Caco-2 (cell line): ENCODE measurements at regions of chr20 and their contacts with region 1.

Region 1: DNA sequence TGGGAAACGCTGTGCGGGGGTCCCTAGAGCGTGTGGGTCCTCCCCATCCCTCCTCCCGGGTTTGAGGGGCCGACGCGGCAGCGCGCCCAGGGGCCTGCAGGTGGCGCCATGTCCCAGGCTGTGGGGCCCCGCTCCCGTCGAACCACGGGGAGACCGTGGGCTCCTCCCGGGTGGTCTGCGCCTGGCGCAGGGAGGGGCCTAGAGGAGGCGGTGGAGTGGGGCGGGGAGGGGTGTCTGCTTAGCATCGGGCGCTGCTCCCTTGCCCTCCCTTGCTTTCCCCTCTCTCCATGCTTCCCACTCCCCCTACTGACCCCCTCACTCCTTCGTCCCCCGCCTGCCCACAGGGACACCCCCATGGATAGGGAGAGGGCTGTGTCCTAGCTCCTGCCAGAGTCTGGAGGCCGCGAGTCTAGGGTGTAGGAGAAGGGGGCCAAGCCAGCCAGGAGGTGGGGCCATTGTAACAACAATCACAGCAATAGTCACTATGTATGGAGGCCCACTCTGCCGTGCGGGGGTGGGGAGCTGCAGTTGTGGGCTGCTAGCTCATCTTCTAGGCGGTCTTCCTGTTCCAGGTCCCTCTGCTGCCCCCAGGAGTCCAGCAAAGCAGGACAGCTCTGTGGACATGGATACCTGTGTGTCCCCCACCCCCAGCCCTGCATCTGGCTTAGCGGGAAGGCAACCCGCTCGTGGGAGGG is 51.7 kb downstream of the CHMP4B start:
- DNase-seq: peak; percentile 77 to 83
- H3K4me3 ChIP-seq: no peak overlapping the region
- H3K4me3 Mint-ChIP-seq: no peak overlapping the region
- H3K27ac Mint-ChIP-seq: no peak overlapping the region
- H3K4me1 ChIP-seq: no peaks in the 10 kb centered on the region; the same call in 1 of the 2 replicates
- H3K4me1 Mint-ChIP-seq: peaks cover 12% of the 10 kb centered on the region
- H3K27me3 ChIP-seq: no peaks in the 10 kb centered on the region
- H3K27me3 Mint-ChIP-seq: no peaks in the 10 kb centered on the region
- CTCF ChIP-seq: peak; percentile 60 to 75

Region 2: DNA sequence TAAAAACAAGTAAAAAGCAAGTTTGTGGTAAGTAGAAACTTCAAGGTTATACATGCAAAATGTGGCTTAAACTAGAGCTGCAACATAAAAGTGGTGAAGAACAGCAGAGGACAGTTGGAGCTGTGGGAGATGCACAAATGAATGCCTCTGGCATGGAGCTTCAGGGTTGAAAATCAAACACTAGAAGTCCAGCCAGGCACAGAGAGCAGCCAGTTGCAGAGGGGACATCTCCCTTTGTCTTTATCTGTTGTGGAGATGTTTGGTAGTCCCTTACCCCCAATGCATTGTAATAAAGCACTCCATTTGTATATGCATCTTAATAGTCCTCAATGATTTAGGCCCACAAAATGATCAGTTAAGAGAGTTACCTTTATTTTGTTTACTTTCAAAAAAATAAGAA is 273.8 kb before region 1 on chr20:
- CTCF ChIA-PET with region 1: no interaction called
- POLR2A ChIA-PET with region 1: no interaction called
- intact Hi-C with region 1: no loop called
- DNase-seq: no peak
- H3K4me3 ChIP-seq: no peak overlapping the region
- H3K4me3 Mint-ChIP-seq: no peak overlapping the region
- H3K27ac Mint-ChIP-seq: no peak overlapping the region
- H3K4me1 ChIP-seq: peaks cover 11% of the 10 kb centered on the region
- H3K4me1 Mint-ChIP-seq: peaks cover 8% of the 10 kb centered on the region
- H3K27me3 ChIP-seq: no peaks in the 10 kb centered on the region
- H3K27me3 Mint-ChIP-seq: no peaks in the 10 kb centered on the region
- CTCF ChIP-seq: no peak

Region 3: GRCh38 chr20:33606118-33606771 is 256.6 kb before region 1 on chr20:
- CTCF ChIA-PET with region 1: no interaction called
- POLR2A ChIA-PET with region 1: no interaction called
- intact Hi-C with region 1: no loop called
- DNase-seq: no peak
- H3K4me3 ChIP-seq: no peak overlapping the region
- H3K4me3 Mint-ChIP-seq: no peak overlapping the region
- H3K27ac Mint-ChIP-seq: no peak overlapping the region
- H3K4me1 ChIP-seq: no peaks in the 10 kb centered on the region
- H3K4me1 Mint-ChIP-seq: no peaks in the 10 kb centered on the region
- H3K27me3 ChIP-seq: no peaks in the 10 kb centered on the region
- H3K27me3 Mint-ChIP-seq: no peaks in the 10 kb centered on the region
- CTCF ChIP-seq: no peak

Region 4: GRCh38 chr20:33791959-33792597 is 70.8 kb before region 1 on chr20:
- CTCF ChIA-PET with region 1: interaction called, 3 read pairs
- POLR2A ChIA-PET with region 1: no interaction called
- intact Hi-C with region 1: loop called (anchors 2 kb)
- DNase-seq: peak in 1 of 2 experiments; percentile 77
- H3K4me3 ChIP-seq: no peak overlapping the region
- H3K4me3 Mint-ChIP-seq: no peak overlapping the region
- H3K27ac Mint-ChIP-seq: no peak overlapping the region
- H3K4me1 ChIP-seq: peaks cover 17% of the 10 kb centered on the region
- H3K4me1 Mint-ChIP-seq: peaks cover 18% of the 10 kb centered on the region
- H3K27me3 ChIP-seq: no peaks in the 10 kb centered on the region
- H3K27me3 Mint-ChIP-seq: no peaks in the 10 kb centered on the region
- CTCF ChIP-seq: peak; percentile 90 to 99

Region 5: GRCh38 chr20:33843854-33844253 is 19.0 kb before region 1 on chr20:
- CTCF ChIA-PET with region 1: no interaction called
- POLR2A ChIA-PET with region 1: no interaction called
- intact Hi-C with region 1: no loop called
- DNase-seq: no peak
- H3K4me3 ChIP-seq: no peak overlapping the region
- H3K4me3 Mint-ChIP-seq: no peak overlapping the region
- H3K27ac Mint-ChIP-seq: no peak overlapping the region
- H3K4me1 ChIP-seq: peaks cover 13% of the 10 kb centered on the region
- H3K4me1 Mint-ChIP-seq: peaks cover 23% of the 10 kb centered on the region
- H3K27me3 ChIP-seq: no peaks in the 10 kb centered on the region
- H3K27me3 Mint-ChIP-seq: no peaks in the 10 kb centered on the region
- CTCF ChIP-seq: no peak

Region 6: GRCh38 chr20:34015401-34016335 is 152.8 kb after region 1 on chr20:
- CTCF ChIA-PET with region 1: no interaction called
- POLR2A ChIA-PET with region 1: no interaction called
- intact Hi-C with region 1: no loop called
- DNase-seq: no peak
- H3K4me3 ChIP-seq: no peak overlapping the region
- H3K4me3 Mint-ChIP-seq: no peak overlapping the region
- H3K27ac Mint-ChIP-seq: no peak overlapping the region
- H3K4me1 ChIP-seq: peaks cover 5% of the 10 kb centered on the region; the same call in 1 of the 2 replicates
- H3K4me1 Mint-ChIP-seq: peaks cover 29% of the 10 kb centered on the region
- H3K27me3 ChIP-seq: no peaks in the 10 kb centered on the region
- H3K27me3 Mint-ChIP-seq: no peaks in the 10 kb centered on the region
- CTCF ChIP-seq: no peak

Region 7: GRCh38 chr20:34083137-34083536 is 220.3 kb after region 1 on chr20:
- CTCF ChIA-PET with region 1: interaction called, 12 read pairs
- POLR2A ChIA-PET with region 1: no interaction called
- intact Hi-C with region 1: no loop called
- DNase-seq: peak in 1 of 2 experiments; percentile 46
- H3K4me3 ChIP-seq: no peak overlapping the region
- H3K4me3 Mint-ChIP-seq: no peak overlapping the region
- H3K27ac Mint-ChIP-seq: no peak overlapping the region
- H3K4me1 ChIP-seq: no peaks in the 10 kb centered on the region
- H3K4me1 Mint-ChIP-seq: no peaks in the 10 kb centered on the region
- H3K27me3 ChIP-seq: no peaks in the 10 kb centered on the region
- H3K27me3 Mint-ChIP-seq: no peaks in the 10 kb centered on the region
- CTCF ChIP-seq: peak in 1 of 2 experiments; percentile 1